Activated CD4-positive, alpha-beta T cell treated with anti-CD3 and anti-CD28 coated beads for 36 hours (primary cell): ENCODE measurements at regions of chr2 and their contacts with region 1.

Region 1: DNA sequence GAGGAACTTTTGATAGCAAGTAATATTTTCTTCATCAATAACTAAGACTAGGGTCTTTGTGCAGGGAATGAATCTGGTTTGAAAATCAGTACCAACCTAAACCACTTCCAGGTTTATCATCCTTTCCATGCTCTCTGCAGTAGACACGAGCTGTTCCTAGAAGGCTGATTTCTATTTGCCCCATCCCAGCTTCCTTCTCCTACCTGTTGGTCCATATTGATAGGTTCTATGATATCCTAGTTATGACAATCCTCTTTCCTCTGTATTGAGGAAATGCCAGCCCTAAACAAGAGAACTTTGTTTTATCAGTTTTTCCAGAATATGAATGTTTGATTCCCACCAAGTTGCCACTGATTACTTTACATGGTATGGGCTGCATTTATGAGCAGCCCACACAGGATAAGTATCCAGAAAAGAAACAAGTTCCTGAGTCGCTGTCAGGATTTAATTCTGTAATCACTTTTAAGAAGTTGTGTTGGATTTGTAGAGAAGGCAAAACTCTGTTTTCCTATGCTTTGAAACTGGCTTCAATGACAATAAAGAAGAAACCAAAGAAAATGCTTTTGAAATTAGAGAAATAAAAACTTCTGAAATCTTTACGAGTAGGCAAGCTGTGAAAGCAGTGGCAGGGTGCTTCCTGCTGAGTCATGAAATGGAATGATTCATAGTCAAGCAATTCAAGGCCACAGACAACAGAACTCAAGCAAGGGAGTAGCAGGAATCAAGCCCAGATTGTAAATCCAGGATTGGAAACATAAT is 37.3 kb upstream of the TANK start:
- DNase-seq: peak; percentile 61
- ATAC-seq: peak; percentile 95
- H3K4me3 Mint-ChIP-seq: no peak overlapping the region
- H3K27ac Mint-ChIP-seq: no peak overlapping the region
- H3K4me1 Mint-ChIP-seq: peaks cover 24% of the 10 kb centered on the region
- H3K27me3 Mint-ChIP-seq: no peaks in the 10 kb centered on the region

Region 2: DNA sequence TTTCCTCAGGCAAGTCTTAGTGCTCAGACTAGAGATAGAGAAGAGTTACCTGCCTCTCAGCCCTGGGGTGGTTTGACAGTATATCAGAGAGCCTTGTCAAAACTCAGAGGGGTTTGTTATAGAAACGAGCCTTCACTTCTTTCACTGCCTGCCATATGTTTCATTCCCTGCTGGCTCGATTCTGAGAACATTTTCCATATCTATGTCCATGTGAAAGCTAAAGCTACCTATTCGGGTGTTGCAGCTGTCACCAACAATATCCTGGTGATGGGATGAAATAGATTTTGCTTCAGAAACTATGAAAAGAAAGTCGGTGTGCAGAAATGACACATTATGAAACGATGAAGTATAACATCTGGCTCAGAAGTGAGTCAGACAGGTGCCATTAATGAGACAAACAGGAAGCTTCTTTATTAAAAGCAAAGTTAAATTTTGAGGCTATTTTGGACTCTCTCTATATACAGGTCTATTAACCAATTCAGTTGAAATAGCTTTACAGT is 18.8 kb before region 1 on chr2:
- CTCF ChIA-PET with region 1: interaction called, 6 read pairs
- POLR2A ChIA-PET with region 1: no interaction called
- intact Hi-C with region 1: loop called (anchors 1 kb)
- DNase-seq: peak; percentile 10
- ATAC-seq: peak; percentile 84
- H3K4me3 Mint-ChIP-seq: no peak overlapping the region
- H3K27ac Mint-ChIP-seq: no peak overlapping the region
- H3K4me1 Mint-ChIP-seq: peaks cover 32% of the 10 kb centered on the region
- H3K27me3 Mint-ChIP-seq: no peaks in the 10 kb centered on the region

Region 3: DNA sequence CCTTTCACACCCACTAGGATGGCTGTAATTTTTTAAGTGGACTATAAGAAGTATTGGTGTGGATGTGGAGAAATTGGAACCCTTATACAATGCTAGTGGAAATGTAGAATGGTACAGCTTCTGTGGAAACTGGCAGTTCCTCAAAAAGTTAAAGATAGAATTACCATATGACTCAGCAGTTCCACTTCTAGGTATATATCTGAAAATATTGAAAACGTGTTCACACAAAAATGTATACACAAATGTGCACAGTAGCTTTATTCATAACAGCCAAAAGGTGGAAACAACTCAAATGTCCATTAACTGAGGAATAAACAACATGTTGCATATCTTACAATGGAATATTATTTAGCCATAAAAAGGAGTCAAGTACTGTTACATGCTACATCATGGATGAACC is 55.0 kb after region 1 on chr2:
- CTCF ChIA-PET with region 1: no interaction called
- POLR2A ChIA-PET with region 1: no interaction called
- intact Hi-C with region 1: no loop called
- DNase-seq: no peak
- ATAC-seq: no peak
- H3K4me3 Mint-ChIP-seq: no peak overlapping the region
- H3K27ac Mint-ChIP-seq: no peak overlapping the region
- H3K4me1 Mint-ChIP-seq: peaks cover 33% of the 10 kb centered on the region
- H3K27me3 Mint-ChIP-seq: no peaks in the 10 kb centered on the region